Activated T-helper 2 cell treated with anti-CD3 and anti-CD28 coated beads, Interferon-gamma antibody, Interleukin-2, Interleukin-4, amounts not matched to agents 10 μg/mL and 5 μg/mL and 100 μg/mL, durations not matched to agents 14 hours and 24 hours and 36 hours (primary cell): ENCODE measurements at regions of chr12 and their contacts with region 1.

Region 1: DNA sequence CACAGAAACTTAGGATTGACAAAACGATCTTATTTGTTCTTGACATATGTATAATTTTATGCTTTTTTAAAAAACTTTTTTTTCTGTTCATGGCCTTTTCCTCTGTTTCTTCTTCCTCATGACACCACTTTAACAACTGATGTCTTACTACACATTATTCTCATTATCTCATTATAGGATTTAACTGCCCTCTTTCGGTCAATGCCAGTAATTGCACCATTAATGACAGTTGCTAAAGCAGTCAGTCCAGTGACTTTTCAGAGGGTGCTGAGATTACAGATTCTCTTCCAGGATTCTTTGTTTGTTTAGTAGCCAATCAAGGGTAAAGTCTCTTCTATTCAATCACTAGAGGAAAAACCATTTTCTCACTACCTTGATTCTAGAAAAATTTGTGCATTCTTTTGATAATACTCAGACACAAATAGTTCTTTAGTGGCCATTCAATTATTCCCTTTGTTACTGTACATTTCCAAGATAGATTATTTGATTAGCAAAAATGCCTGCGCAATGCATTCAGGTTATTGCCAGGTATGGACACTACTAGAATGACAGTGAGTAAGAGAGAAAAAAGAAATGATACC is 50.1 kb downstream of the KLRG1 start:
- DNase-seq: no peak
- H3K4me3 Mint-ChIP-seq: no peak overlapping the region
- H3K27ac Mint-ChIP-seq: no peak overlapping the region
- H3K4me1 Mint-ChIP-seq: peaks cover 24% of the 10 kb centered on the region
- H3K27me3 Mint-ChIP-seq: peaks cover 21% of the 10 kb centered on the region

Region 2: DNA sequence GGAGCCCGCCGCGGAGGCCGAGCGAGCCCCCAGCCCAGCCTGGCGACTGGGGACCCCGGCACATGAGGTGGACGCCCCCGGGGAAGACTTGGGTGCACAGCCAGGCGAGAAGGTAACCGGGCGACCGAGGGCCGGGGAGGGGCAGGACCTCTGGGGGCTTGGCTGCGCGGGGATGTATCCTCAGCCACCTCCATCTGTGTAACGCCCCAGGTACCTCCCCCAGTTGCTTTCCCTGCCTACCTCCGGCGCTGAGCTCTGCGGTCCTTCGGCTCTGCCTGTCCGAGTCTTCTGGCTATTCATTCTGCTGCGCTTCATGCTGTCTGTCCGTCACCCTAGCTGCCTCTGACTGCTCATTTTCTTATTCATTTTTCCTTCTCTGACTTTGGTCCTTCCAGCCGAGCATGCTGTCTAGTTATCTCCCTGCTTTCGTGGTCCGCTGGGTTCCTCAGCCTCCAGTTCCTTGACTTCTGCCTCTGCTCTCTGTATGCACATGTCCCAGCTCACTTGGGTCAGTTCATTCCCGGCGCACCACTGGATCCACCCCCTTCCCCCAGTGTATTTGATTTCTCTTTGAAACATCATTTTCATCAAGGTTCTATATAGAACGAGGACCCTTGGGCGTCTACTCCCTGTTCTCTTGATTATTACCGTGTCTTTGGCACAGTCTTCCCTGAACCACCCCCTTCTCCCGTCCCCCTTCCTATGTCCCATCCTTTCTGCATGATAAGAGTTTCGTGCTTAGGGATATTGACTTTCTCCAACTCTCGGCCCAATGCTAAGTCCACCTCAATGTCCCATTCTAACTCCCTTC is 124.6 kb before region 1 on chr12:
- intact Hi-C with region 1: loop called (anchors 2 kb)
- DNase-seq: peak; percentile 56
- H3K4me3 Mint-ChIP-seq: no peak overlapping the region
- H3K27ac Mint-ChIP-seq: no peak overlapping the region
- H3K4me1 Mint-ChIP-seq: peaks cover 13% of the 10 kb centered on the region
- H3K27me3 Mint-ChIP-seq: peaks cover 27% of the 10 kb centered on the region

Region 3: DNA sequence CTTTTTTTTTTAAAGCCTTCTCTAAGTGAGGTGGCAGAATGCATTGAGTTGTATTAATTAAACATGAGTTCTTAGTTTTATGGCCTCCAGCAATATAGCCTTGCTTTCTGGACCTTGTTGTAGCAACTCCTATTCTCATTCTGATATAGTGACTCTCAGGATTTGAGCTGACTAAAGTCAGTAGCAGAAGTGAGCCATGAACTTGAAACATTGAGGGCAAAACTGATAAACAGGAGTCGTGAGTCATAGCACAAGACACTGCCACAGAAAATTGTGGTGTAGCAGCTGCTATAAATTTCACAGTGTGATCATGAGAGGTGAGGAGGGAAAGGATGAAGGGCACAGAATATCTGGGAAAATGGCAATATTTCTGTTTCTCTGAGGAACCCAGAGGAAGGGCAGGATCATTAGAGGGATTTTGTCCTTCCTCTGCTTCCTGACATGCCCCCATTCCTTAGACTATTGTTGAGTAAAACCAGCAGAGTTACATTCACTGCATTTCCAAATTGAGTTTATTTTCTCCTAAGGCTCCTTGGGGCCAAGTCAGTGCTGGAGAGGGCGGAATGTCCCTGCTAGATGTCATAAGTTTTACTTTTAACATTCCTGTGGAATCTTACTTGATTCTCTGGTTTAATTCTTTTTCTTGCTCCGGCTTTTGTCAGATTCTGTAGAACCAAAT is 42.7 kb before region 1 on chr12:
- intact Hi-C with region 1: loop called (anchors 1 kb)
- DNase-seq: no peak
- H3K4me3 Mint-ChIP-seq: no peak overlapping the region
- H3K27ac Mint-ChIP-seq: no peak overlapping the region
- H3K4me1 Mint-ChIP-seq: peaks cover 25% of the 10 kb centered on the region
- H3K27me3 Mint-ChIP-seq: peaks cover 34% of the 10 kb centered on the region

Region 4: GRCh38 chr12:9079883-9080675 is 40.6 kb after region 1 on chr12:
- intact Hi-C with region 1: no loop called
- DNase-seq: no peak
- H3K4me3 Mint-ChIP-seq: no peak overlapping the region
- H3K27ac Mint-ChIP-seq: no peak overlapping the region
- H3K4me1 Mint-ChIP-seq: no peaks in the 10 kb centered on the region
- H3K27me3 Mint-ChIP-seq: peaks cover 14% of the 10 kb centered on the region

Region 5: GRCh38 chr12:9597365-9597764 is 557.9 kb after region 1 on chr12:
- intact Hi-C with region 1: no loop called
- DNase-seq: no peak
- H3K4me3 Mint-ChIP-seq: no peak overlapping the region
- H3K27ac Mint-ChIP-seq: no peak overlapping the region
- H3K4me1 Mint-ChIP-seq: no peaks in the 10 kb centered on the region
- H3K27me3 Mint-ChIP-seq: peaks cover 29% of the 10 kb centered on the region